ENCODE measurements at regions of chr9 and their contacts with region 1.

Region 1: GRCh38 chr9:137034863-137035761 is 3.2 kb upstream of the FUT7 start:
- DNase-seq: peak; percentile 90 to 92
- ATAC-seq: peak; percentile 76 to 94
- H3K4me3 ChIP-seq: no peak overlapping the region
- H3K27ac ChIP-seq: peak overlapping the region; percentile 34 to 67; a peak in 4 of 6 replicates
- H3K4me1 ChIP-seq: peaks cover 18% of the 10 kb centered on the region
- CTCF ChIP-seq: peak; percentile 86
- EP300 ChIP-seq: no peak
- POLR2A ChIP-seq: no peak
- RAD21 ChIP-seq: peak; percentile 82 to 92

Region 2: GRCh38 chr9:136944519-136945279 is 90.4 kb before region 1 on chr9 and contains the starts of genes C8G and FBXW5:
- CTCF ChIA-PET with region 1: interaction called, 282 read pairs
- POLR2A ChIA-PET with region 1: interaction called, 4 read pairs
- DNase-seq: peak; percentile 89 to 91
- ATAC-seq: peak; percentile 34 to 47
- H3K4me3 ChIP-seq: peak within 1 kb of the TSS; percentile 78
- H3K27ac ChIP-seq: peak within 1 kb of the TSS; percentile 98 to 99
- H3K4me1 ChIP-seq: peaks cover 36% of the 10 kb centered on the region
- CTCF ChIP-seq: peak; percentile 94
- EP300 ChIP-seq: no peak; a peak in 1 of 5 replicates
- POLR2A ChIP-seq: peak; percentile 60
- RAD21 ChIP-seq: peak; percentile 21 to 40; a peak in 3 of 5 replicates
- polyA plus RNA-seq, gene C8G: 0.41 and 0.45 TPM in 2 replicates
- polyA plus RNA-seq, gene FBXW5: 37.3 and 37.5 TPM in 2 replicates

Region 3: DNA sequence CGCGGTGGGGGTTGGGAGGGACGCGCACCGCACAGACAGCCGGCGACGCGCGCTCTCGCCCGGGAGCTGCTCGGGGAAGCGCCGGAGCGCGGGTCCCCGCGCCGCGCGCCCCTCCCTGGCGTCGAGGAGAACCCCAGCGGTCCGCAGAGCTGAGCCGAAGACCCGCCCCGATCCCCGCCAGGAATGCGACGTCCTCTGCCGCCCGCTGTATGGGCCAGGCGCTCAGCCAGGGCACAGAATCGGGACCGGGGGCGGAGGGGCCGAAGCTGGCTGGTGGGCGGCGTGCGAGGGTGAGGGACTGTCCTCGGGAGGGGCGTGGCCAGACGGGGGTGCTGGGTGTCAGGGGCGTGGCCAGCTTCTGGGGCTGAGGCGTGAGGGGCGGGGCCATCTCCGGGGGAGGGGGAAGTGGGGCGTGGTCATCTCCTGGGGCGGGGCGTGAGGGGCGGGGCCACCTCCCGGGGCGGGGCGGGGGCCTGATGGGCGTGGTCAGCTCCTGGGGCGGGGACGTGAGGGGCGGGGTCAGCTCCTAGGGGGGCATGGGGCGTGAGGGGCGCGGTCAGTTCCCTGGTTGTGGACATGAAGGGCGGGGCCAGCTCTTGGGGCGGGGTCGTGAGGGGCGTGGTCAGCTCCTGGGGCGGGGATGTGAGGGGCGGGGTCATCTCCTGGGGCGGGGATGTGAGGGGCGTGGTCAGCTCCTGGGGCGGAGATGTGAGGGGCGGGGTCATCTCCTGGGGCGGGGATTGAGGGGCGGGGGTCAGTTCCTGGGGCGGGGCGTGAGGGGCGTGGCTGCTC is 56.8 kb before region 1 on chr9:
- CTCF ChIA-PET with region 1: interaction called, 15 read pairs
- POLR2A ChIA-PET with region 1: no interaction called
- DNase-seq: peak; percentile 89 to 95
- ATAC-seq: peak; percentile 4 to 56
- H3K4me3 ChIP-seq: peak overlapping the region; percentile 45
- H3K27ac ChIP-seq: peak overlapping the region; percentile 52 to 94
- H3K4me1 ChIP-seq: peaks cover 14% of the 10 kb centered on the region
- CTCF ChIP-seq: no peak
- EP300 ChIP-seq: no peak
- POLR2A ChIP-seq: no peak
- RAD21 ChIP-seq: no peak

Region 4: DNA sequence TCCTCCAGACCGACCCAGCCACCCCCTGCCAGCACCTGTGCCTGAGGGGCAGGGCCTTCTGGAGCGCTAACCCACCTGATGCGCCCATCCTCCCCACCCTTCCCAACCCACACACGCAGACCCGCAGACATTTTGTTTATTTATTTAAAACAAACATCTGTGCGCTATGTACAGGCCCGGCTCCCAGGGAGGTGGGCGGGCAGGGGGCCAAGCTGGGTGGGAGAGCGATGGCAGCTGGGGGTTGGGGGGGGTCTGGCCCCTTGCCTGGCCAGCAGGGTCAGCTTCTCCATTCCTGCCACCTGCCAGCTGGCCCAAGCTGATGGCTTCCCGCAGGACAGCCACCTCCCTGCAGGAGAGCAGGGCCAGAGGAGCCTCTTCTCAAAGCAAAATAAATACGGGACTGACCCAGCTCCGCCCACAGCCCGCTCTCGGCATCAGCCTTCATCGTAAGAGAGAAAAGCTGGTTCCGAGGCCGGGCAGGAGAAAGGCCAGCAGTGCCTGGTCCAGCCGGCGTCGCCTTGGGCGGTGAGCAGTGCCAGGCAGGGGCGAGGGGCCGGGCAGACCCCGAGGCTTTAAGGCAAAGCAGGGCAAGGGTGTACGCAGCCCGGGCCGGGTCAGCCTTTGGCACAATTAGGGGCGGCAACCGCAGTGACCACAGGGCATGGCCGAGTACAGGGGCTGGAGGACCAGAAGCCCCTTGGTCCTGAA is 27.9 kb before region 1 on chr9:
- CTCF ChIA-PET with region 1: interaction called, 37 read pairs
- POLR2A ChIA-PET with region 1: no interaction called
- DNase-seq: no peak
- ATAC-seq: peak in 1 of 2 experiments; percentile 47; a peak in 3 of 6 replicates
- H3K4me3 ChIP-seq: no peak overlapping the region
- H3K27ac ChIP-seq: no peak overlapping the region
- H3K4me1 ChIP-seq: peaks cover 5% of the 10 kb centered on the region; the same call in 2 of the 3 replicates
- CTCF ChIP-seq: no peak
- EP300 ChIP-seq: no peak
- POLR2A ChIP-seq: no peak
- RAD21 ChIP-seq: no peak

Region 5: GRCh38 chr9:137055385-137056364 is 20.6 kb after region 1 on chr9:
- CTCF ChIA-PET with region 1: interaction called, 40 read pairs
- POLR2A ChIA-PET with region 1: no interaction called
- DNase-seq: peak; percentile 58 to 76
- ATAC-seq: peak; percentile 54 to 82
- H3K4me3 ChIP-seq: no peak overlapping the region
- H3K27ac ChIP-seq: peak overlapping the region; percentile 79 to 88
- H3K4me1 ChIP-seq: peaks cover 56% of the 10 kb centered on the region
- CTCF ChIP-seq: no peak
- EP300 ChIP-seq: no peak
- POLR2A ChIP-seq: no peak
- RAD21 ChIP-seq: no peak

Measured in A549 (cell line).